CD4-positive, alpha-beta T cell (primary cell): ENCODE measurements at regions of chr18 and their contacts with region 1.

Region 1: DNA sequence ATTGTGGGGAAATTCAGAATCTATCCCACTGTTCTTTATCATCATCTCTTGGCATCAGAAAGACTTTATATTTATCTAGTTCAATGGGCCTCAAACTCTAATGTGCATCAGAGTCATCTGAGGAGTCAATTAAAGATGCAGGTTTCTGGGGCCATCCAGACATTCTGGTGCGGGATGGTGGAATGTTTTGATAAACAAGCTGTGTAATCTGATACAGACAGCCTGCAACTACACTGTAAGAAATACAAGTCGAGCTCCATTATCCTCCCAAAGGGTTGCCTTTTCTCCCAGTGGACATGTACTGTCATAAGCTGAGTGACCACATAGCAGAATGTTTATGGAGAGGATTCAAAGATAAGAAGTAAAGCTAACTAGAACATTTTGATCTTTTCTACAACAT is 515.3 kb upstream of the DCC start:
- DNase-seq: no peak
- ATAC-seq: no peak
- H3K4me3 ChIP-seq: no peak overlapping the region
- H3K4me3 Mint-ChIP-seq: no peak overlapping the region
- H3K27ac ChIP-seq: no peak overlapping the region
- H3K27ac Mint-ChIP-seq: no peak overlapping the region
- H3K4me1 ChIP-seq: no peaks in the 10 kb centered on the region
- H3K4me1 Mint-ChIP-seq: no peaks in the 10 kb centered on the region
- H3K27me3 ChIP-seq: no peaks in the 10 kb centered on the region
- H3K27me3 Mint-ChIP-seq: peaks cover 7% of the 10 kb centered on the region
- CTCF ChIP-seq: no peak

Region 2: GRCh38 chr18:51767293-51767692 is 57.5 kb before region 1 on chr18:
- CTCF ChIA-PET with region 1: no interaction called
- POLR2A ChIA-PET with region 1: no interaction called
- intact Hi-C with region 1: loop called in 1 of 2 experiments (anchors 10 kb)
- DNase-seq: no peak
- ATAC-seq: no peak
- H3K4me3 ChIP-seq: no peak overlapping the region
- H3K4me3 Mint-ChIP-seq: no peak overlapping the region
- H3K27ac ChIP-seq: no peak overlapping the region
- H3K27ac Mint-ChIP-seq: no peak overlapping the region
- H3K4me1 ChIP-seq: no peaks in the 10 kb centered on the region
- H3K4me1 Mint-ChIP-seq: no peaks in the 10 kb centered on the region
- H3K27me3 ChIP-seq: no peaks in the 10 kb centered on the region
- H3K27me3 Mint-ChIP-seq: peaks cover 3% of the 10 kb centered on the region
- CTCF ChIP-seq: no peak